HCT116 (cell line): ENCODE measurements at regions of chr4 and their contacts with region 1.

Region 1: GRCh38 chr4:138035781-138036258 is 206.3 kb downstream of the SLC7A11 start:
- DNase-seq: peak; percentile 53
- ATAC-seq: peak; percentile 96
- H3K4me3 ChIP-seq: no peak overlapping the region
- H3K27ac ChIP-seq: no peak overlapping the region
- H3K4me1 ChIP-seq: no peaks in the 10 kb centered on the region
- H3K27me3 ChIP-seq: no peaks in the 10 kb centered on the region
- CTCF ChIP-seq: peak; percentile 50 to 87 (median 71)
- POLR2A ChIP-seq: no peak
- RAD21 ChIP-seq: peak; percentile 95

Region 2: GRCh38 chr4:137819964-137820383 is 215.8 kb before region 1 on chr4:
- CTCF ChIA-PET with region 1: interaction called, 16 read pairs
- POLR2A ChIA-PET with region 1: no interaction called
- RAD21 ChIA-PET with region 1: no interaction called
- intact Hi-C with region 1: loop called (anchors 5 kb)
- DNase-seq: peak; percentile 50
- ATAC-seq: peak; percentile 99
- H3K4me3 ChIP-seq: no peak overlapping the region
- H3K27ac ChIP-seq: no peak overlapping the region
- H3K4me1 ChIP-seq: no peaks in the 10 kb centered on the region
- H3K27me3 ChIP-seq: no peaks in the 10 kb centered on the region
- CTCF ChIP-seq: peak; percentile 67 to 78 (median 72)
- POLR2A ChIP-seq: no peak
- RAD21 ChIP-seq: peak; percentile 92

Region 3: DNA sequence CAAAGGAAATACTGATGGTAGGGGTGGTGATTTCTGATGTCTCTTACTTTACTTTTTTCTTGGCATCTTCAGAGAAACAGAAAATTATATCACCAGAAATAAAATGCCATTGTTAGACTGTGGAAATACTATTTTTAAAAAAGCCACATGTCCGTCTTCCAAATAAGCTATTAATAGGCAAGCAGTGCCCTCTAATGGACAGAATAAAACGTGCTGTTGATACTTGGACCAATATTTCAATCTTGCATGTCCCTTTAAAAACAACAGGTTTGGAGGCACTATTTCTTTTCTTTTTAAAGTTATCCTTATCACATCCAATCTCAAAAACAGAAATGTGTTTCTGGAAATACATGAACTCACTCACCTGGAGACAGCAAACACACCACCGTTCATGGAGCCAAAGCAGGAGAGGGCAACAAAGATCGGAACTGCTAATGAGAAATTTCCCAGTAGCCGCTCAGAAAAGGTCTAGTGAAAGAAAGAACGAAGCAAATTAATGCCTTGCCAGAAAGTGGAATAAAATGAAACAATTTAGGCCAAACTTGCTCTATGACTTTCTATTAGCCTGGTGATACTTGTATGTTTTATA is 147.1 kb after region 1 on chr4:
- CTCF ChIA-PET with region 1: interaction called, 14 read pairs
- POLR2A ChIA-PET with region 1: no interaction called
- RAD21 ChIA-PET with region 1: interaction called in 1 of 2 experiments, 4 read pairs
- intact Hi-C with region 1: loop called (anchors 1 kb)
- DNase-seq: peak; percentile 45
- ATAC-seq: no peak
- H3K4me3 ChIP-seq: no peak overlapping the region
- H3K27ac ChIP-seq: no peak overlapping the region
- H3K4me1 ChIP-seq: no peaks in the 10 kb centered on the region
- H3K27me3 ChIP-seq: no peaks in the 10 kb centered on the region
- CTCF ChIP-seq: peak; percentile 45 to 81 (median 59)
- POLR2A ChIP-seq: no peak
- RAD21 ChIP-seq: peak; percentile 73

Region 4: DNA sequence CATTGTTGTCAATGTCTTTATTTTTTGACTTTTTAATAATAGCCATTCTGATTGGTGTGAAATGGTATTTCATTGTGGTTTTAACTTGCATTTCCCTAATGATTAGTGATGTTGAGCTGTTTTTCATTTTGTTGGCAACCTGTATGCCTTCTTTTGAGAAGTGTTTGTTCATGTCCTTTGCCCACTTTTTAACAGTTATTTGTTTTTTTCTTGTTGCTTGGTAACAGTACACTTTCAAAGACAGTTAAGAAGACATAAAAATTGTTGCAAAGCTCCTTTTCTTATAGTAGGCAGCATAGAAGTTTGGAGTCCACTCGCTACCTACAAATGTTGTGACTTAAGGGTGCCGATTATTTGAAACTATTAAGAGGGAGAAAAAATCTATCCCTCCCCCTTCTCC is 255.0 kb after region 1 on chr4:
- CTCF ChIA-PET with region 1: no interaction called
- POLR2A ChIA-PET with region 1: no interaction called
- RAD21 ChIA-PET with region 1: no interaction called
- intact Hi-C with region 1: no loop called
- DNase-seq: no peak
- ATAC-seq: no peak
- H3K4me3 ChIP-seq: no peak overlapping the region
- H3K27ac ChIP-seq: no peak overlapping the region
- H3K4me1 ChIP-seq: no peaks in the 10 kb centered on the region
- H3K27me3 ChIP-seq: no peaks in the 10 kb centered on the region
- CTCF ChIP-seq: no peak
- POLR2A ChIP-seq: no peak
- RAD21 ChIP-seq: no peak

Region 5: GRCh38 chr4:138428611-138429010 is 392.8 kb after region 1 on chr4:
- CTCF ChIA-PET with region 1: no interaction called
- POLR2A ChIA-PET with region 1: no interaction called
- RAD21 ChIA-PET with region 1: no interaction called
- intact Hi-C with region 1: no loop called
- DNase-seq: no peak
- ATAC-seq: no peak
- H3K4me3 ChIP-seq: no peak overlapping the region
- H3K27ac ChIP-seq: no peak overlapping the region
- H3K4me1 ChIP-seq: no peaks in the 10 kb centered on the region
- H3K27me3 ChIP-seq: no peaks in the 10 kb centered on the region
- CTCF ChIP-seq: no peak
- POLR2A ChIP-seq: no peak
- RAD21 ChIP-seq: no peak

Region 6: DNA sequence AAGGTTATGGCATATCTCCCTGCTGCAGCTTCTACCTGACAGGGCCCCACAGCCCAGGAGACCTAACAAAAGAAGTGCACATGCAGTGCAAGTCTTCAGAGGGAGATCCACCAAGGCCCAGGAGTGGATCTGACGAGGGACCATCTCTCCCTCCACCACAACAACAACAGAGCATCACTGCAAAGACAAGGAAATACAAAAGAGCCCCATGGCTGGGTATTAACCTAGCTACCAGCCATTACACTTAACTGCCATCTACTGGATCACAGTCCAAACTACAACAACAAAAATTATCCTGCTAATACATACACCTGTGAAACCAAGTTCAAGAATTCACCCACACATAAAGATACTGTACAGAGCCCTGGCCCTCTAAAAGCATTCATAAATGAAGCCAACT is 486.5 kb after region 1 on chr4:
- CTCF ChIA-PET with region 1: interaction called, 18 read pairs
- POLR2A ChIA-PET with region 1: no interaction called
- RAD21 ChIA-PET with region 1: no interaction called
- intact Hi-C with region 1: loop called (anchors 5 kb)
- DNase-seq: peak; percentile 6
- ATAC-seq: peak; percentile 81
- H3K4me3 ChIP-seq: no peak overlapping the region
- H3K27ac ChIP-seq: no peak overlapping the region
- H3K4me1 ChIP-seq: no peaks in the 10 kb centered on the region
- H3K27me3 ChIP-seq: no peaks in the 10 kb centered on the region
- CTCF ChIP-seq: peak; percentile 35 to 54 (median 43); a peak in 4 of 6 replicates
- POLR2A ChIP-seq: no peak
- RAD21 ChIP-seq: peak; percentile 70

Region 7: GRCh38 chr4:138576684-138577083 is 540.9 kb after region 1 on chr4:
- CTCF ChIA-PET with region 1: interaction called, 15 read pairs
- POLR2A ChIA-PET with region 1: no interaction called
- RAD21 ChIA-PET with region 1: no interaction called
- intact Hi-C with region 1: loop called (anchors 1 kb)
- DNase-seq: peak; percentile 64
- ATAC-seq: peak; percentile 89
- H3K4me3 ChIP-seq: no peak overlapping the region
- H3K27ac ChIP-seq: no peak overlapping the region
- H3K4me1 ChIP-seq: no peaks in the 10 kb centered on the region
- H3K27me3 ChIP-seq: no peaks in the 10 kb centered on the region
- CTCF ChIP-seq: peak; percentile 56 to 81 (median 62); a peak in 5 of 6 replicates
- POLR2A ChIP-seq: no peak
- RAD21 ChIP-seq: peak; percentile 88

Region 8: GRCh38 chr4:138680989-138681604 is 645.3 kb after region 1 on chr4:
- CTCF ChIA-PET with region 1: interaction called, 13 read pairs
- POLR2A ChIA-PET with region 1: no interaction called
- RAD21 ChIA-PET with region 1: interaction called in 1 of 2 experiments, 3 read pairs
- intact Hi-C with region 1: loop called (anchors 1 kb)
- DNase-seq: peak; percentile 57
- ATAC-seq: peak; percentile 84
- H3K4me3 ChIP-seq: no peak overlapping the region
- H3K27ac ChIP-seq: no peak overlapping the region
- H3K4me1 ChIP-seq: no peaks in the 10 kb centered on the region
- H3K27me3 ChIP-seq: no peaks in the 10 kb centered on the region
- CTCF ChIP-seq: peak; percentile 72 to 96 (median 74); a peak in 5 of 6 replicates
- POLR2A ChIP-seq: no peak
- RAD21 ChIP-seq: peak; percentile 91